GM12878 (cell line): ENCODE measurements at regions of chr2 and their contacts with region 1.

Region 1: DNA sequence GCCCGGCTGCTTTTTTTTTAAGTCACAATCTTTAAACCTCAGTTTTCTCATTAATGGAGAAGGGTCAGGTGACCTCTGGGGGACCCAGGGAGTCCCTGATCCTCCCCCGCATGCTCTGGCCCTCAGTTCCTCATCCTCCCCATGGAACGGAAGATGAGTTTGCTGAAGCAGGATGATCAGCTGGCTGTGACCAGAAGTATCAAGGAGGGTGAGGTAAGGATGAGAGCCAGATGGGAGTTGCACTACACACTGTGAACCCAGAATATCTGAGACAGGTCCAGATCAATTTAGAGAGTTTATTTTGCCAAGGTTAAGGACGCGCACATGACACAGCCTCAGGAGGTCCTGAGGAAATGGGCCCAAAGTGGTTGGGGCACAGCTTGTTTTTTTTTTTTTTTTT is 3.8 kb downstream of the CATIP start:
- DNase-seq: no peak
- ATAC-seq: no peak
- H3K4me3 ChIP-seq: no peak overlapping the region
- H3K27ac ChIP-seq: no peak overlapping the region
- H3K4me1 ChIP-seq: peaks cover 7% of the 10 kb centered on the region
- H3K27me3 ChIP-seq: no peaks in the 10 kb centered on the region
- CTCF ChIP-seq: no peak
- EP300 ChIP-seq: no peak
- POLR2A ChIP-seq: no peak
- RAD21 ChIP-seq: no peak

Region 2: DNA sequence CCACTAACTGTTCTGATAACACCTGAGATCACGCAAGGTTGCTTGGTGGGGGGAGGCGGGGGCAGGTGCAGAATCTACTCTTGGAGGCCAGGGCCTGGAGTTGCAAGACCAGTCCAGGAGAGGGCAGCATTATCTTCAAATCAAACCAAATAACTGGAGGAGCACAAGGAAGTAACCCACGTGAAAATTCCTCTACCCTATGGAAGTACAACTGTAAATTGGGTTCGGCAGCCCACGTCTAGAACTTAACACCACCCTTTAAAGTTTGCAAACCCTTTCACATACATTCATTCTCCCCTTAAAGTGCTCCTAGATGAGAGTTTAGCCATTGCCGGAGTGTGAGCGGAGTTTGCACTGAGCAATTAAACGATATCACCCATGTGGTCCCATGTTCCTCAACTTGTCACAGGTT is 174.1 kb before region 1 on chr2:
- CTCF ChIA-PET with region 1: interaction called, 3 read pairs
- POLR2A ChIA-PET with region 1: no interaction called
- RAD21 ChIA-PET with region 1: no interaction called
- SMC1A ChIA-PET with region 1: no interaction called
- in situ Hi-C with region 1: no loop called
- intact Hi-C with region 1: loop called (anchors 10 kb)
- DNase-seq: peak; percentile 25
- ATAC-seq: peak; percentile 96
- H3K4me3 ChIP-seq: no peak overlapping the region
- H3K27ac ChIP-seq: no peak overlapping the region
- H3K4me1 ChIP-seq: no peaks in the 10 kb centered on the region
- H3K27me3 ChIP-seq: peaks cover 0 to 1% of the 10 kb centered on the region in 2 experiments; a peak in 3 of 4 replicates
- CTCF ChIP-seq: peak; percentile 82 to 86 (median 85)
- EP300 ChIP-seq: no peak
- POLR2A ChIP-seq: no peak
- RAD21 ChIP-seq: peak; percentile 78

Region 3: GRCh38 chr2:218238887-218239286 is 121.6 kb before region 1 on chr2:
- CTCF ChIA-PET with region 1: no interaction called
- POLR2A ChIA-PET with region 1: no interaction called
- RAD21 ChIA-PET with region 1: no interaction called
- SMC1A ChIA-PET with region 1: no interaction called
- in situ Hi-C with region 1: no loop called
- intact Hi-C with region 1: no loop called
- DNase-seq: no peak
- ATAC-seq: no peak
- H3K4me3 ChIP-seq: no peak overlapping the region
- H3K27ac ChIP-seq: no peak overlapping the region
- H3K4me1 ChIP-seq: no peaks in the 10 kb centered on the region
- H3K27me3 ChIP-seq: no peaks in the 10 kb centered on the region
- CTCF ChIP-seq: no peak
- EP300 ChIP-seq: no peak
- POLR2A ChIP-seq: no peak
- RAD21 ChIP-seq: no peak

Region 4: GRCh38 chr2:218286570-218287459 is 73.6 kb before region 1 on chr2:
- CTCF ChIA-PET with region 1: interaction called, 21 read pairs
- POLR2A ChIA-PET with region 1: no interaction called
- RAD21 ChIA-PET with region 1: interaction called, 30 read pairs
- SMC1A ChIA-PET with region 1: interaction called, 11 read pairs
- in situ Hi-C with region 1: no loop called
- intact Hi-C with region 1: no loop called
- DNase-seq: peak; percentile 72
- ATAC-seq: peak; percentile 76
- H3K4me3 ChIP-seq: peak overlapping the region; percentile 64
- H3K27ac ChIP-seq: peak overlapping the region; percentile 95
- H3K4me1 ChIP-seq: peaks cover 55% of the 10 kb centered on the region
- H3K27me3 ChIP-seq: no peaks in the 10 kb centered on the region
- CTCF ChIP-seq: no peak
- EP300 ChIP-seq: no peak
- POLR2A ChIP-seq: peak; percentile 57; the same call in 1 of the 2 replicates
- RAD21 ChIP-seq: no peak

Region 5: DNA sequence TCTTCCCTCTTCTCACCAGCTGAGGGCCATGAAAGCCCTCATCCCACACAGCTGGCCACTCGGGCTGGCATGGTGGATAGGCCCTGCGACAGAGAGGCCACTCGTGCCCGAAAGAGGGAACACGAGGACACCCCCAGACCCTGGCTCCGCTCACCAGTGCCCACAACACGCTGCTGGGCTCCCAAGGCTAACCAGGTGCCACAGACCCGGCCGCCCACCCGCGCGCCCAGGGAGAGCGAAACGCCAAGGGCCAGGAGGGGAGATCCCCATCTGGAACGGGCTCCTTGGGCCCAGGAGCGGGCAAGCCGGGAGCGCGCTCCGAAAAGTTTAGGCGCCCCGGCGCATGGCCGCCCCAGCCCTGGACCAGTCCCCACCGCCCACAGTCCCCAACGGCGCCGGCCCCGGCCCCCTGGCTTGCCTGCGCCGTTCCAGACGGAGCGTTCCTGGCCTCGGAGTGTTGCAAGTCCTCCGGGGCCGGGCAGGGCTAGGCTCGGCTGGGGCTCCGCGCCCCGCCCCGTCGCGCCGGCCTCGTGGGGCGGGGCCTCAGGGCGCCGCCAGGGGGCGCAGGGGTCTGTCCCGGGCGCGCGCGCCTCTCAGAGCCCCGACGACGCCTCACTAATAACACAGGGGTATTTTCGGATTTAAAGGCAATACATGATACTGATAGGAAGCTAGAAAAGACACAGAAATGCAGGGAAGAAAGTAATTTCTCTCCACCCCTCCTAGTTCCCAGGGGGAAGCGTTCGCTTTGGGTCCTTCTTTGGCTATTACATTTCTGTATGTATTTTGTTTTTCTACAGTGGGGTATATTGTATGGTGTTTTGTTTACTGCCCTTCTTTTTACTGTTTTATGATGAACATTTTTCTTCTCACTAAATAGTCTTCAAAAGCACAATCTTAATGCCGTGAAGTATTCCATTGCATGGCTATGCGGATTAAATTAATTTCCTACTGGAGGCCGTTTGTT is 68.1 kb before region 1 on chr2 and contains the start of gene TMBIM1:
- CTCF ChIA-PET with region 1: interaction called, 43 read pairs
- POLR2A ChIA-PET with region 1: interaction called, 5 read pairs
- RAD21 ChIA-PET with region 1: interaction called, 30 read pairs
- SMC1A ChIA-PET with region 1: interaction called, 11 read pairs
- in situ Hi-C with region 1: no loop called
- intact Hi-C with region 1: no loop called
- DNase-seq: no peak
- ATAC-seq: peak; percentile 87
- H3K4me3 ChIP-seq: peak within 1 kb of the TSS; percentile 85
- H3K27ac ChIP-seq: peak within 1 kb of the TSS; percentile 72
- H3K4me1 ChIP-seq: peaks cover 28% of the 10 kb centered on the region
- H3K27me3 ChIP-seq: no peaks in the 10 kb centered on the region
- CTCF ChIP-seq: peak; percentile 68 to 92 (median 85)
- EP300 ChIP-seq: no peak
- POLR2A ChIP-seq: peak; percentile 58
- RAD21 ChIP-seq: peak; percentile 51
- polyA plus RNA-seq, gene TMBIM1: 6.1 to 11.7 TPM

Region 6: DNA sequence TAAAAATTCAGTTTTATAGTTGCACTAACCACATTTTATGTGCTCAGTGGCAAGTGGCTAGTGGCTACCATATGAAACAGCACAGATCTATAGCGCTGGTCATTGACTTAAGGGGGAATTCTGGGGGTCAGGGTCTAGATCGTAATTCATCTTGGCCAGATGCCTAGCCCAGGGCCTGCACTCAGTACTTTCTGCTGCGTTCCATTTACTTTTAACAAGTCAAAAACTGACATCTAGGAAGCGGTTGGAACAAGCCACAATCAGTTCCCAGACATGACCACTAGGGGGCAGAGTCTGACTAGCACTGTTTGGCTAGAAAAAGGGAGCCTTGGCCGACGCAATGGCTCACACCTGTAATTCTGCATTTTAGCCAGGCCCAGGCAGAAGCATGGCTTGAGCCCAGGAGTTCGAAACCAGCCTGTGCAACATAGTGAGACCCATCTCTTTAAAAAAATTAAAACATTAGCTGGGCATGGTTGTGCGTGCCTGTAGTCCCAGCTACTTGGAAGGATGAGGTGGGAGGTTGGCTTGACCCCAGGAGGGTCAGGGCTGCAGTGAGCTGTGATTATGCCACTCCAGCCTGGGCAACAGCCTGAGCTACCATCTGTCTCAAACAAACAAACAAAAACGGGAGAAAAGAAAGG is 59.1 kb before region 1 on chr2:
- CTCF ChIA-PET with region 1: interaction called, 138 read pairs
- POLR2A ChIA-PET with region 1: interaction called, 10 read pairs
- RAD21 ChIA-PET with region 1: interaction called, 34 read pairs
- SMC1A ChIA-PET with region 1: interaction called, 70 read pairs
- in situ Hi-C with region 1: no loop called
- intact Hi-C with region 1: loop called (anchors 1 kb)
- DNase-seq: peak; percentile 82
- ATAC-seq: peak; percentile 97
- H3K4me3 ChIP-seq: no peak overlapping the region
- H3K27ac ChIP-seq: no peak overlapping the region
- H3K4me1 ChIP-seq: no peaks in the 10 kb centered on the region
- H3K27me3 ChIP-seq: no peaks in the 10 kb centered on the region
- CTCF ChIP-seq: peak; percentile 90 to 93 (median 92)
- EP300 ChIP-seq: no peak
- POLR2A ChIP-seq: no peak
- RAD21 ChIP-seq: peak; percentile 97

Region 7: GRCh38 chr2:218322895-218323808 is 37.3 kb before region 1 on chr2:
- CTCF ChIA-PET with region 1: interaction called, 14 read pairs
- POLR2A ChIA-PET with region 1: no interaction called
- RAD21 ChIA-PET with region 1: no interaction called
- SMC1A ChIA-PET with region 1: interaction called, 7 read pairs
- in situ Hi-C with region 1: no loop called
- intact Hi-C with region 1: loop called (anchors 5 kb)
- DNase-seq: no peak
- ATAC-seq: peak; percentile 87
- H3K4me3 ChIP-seq: peak overlapping the region; percentile 69
- H3K27ac ChIP-seq: no peak overlapping the region
- H3K4me1 ChIP-seq: peaks cover 15% of the 10 kb centered on the region
- H3K27me3 ChIP-seq: no peaks in the 10 kb centered on the region
- CTCF ChIP-seq: no peak
- EP300 ChIP-seq: no peak
- POLR2A ChIP-seq: peak; percentile 35; the same call in 1 of the 2 replicates
- RAD21 ChIP-seq: no peak

Region 8: DNA sequence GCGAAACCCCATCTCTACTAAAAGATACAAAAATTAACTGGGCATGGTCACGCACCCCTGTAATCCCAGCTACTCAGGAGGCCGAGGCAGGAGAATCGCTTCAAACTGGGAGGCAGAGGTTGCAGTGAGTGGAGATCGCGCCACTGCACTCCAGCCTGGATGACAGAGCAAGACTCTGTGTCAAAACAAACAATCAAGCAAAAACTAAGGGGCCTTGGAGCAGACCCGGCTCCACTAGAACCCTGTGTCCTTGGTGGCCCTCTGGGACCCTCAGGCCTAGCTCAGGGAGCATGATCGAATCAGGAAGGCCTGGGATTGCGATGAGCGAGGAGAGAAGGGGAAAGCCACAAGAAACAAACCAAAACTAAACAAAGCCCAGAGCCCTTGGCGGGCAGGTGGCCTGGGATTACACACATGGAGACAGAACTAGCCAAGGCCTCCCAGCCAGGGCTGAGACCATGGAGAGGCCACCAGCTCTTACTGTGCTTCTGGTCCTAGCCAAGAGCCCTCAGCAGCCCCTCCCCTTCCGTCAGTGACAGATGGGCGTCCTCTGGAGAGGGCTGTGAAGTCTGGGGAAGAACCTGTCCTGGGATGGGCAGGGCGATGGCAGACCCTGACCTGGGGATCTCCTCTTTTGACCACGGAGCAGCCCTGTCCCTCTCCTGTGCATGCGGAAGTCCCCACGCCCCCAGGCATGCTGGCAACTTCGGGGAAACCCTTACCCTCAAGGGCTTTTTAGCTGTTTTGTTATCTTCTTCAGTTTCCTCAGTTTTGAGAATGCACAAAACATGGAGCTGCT is 31.2 kb before region 1 on chr2:
- CTCF ChIA-PET with region 1: interaction called, 14 read pairs
- POLR2A ChIA-PET with region 1: interaction called, 10 read pairs
- RAD21 ChIA-PET with region 1: interaction called, 16 read pairs
- SMC1A ChIA-PET with region 1: interaction called, 12 read pairs
- in situ Hi-C with region 1: no loop called
- intact Hi-C with region 1: loop called (anchors 5 kb)
- DNase-seq: peak; percentile 77
- ATAC-seq: peak; percentile 81
- H3K4me3 ChIP-seq: peak overlapping the region; percentile 12; the same call in 1 of the 2 replicates
- H3K27ac ChIP-seq: peak overlapping the region; percentile 77
- H3K4me1 ChIP-seq: peaks cover 49% of the 10 kb centered on the region
- H3K27me3 ChIP-seq: no peaks in the 10 kb centered on the region
- CTCF ChIP-seq: no peak
- EP300 ChIP-seq: 0 out of 4 replicates have a peak, but pooled peaks of 1 of the 2 experiments have one; percentile 39
- POLR2A ChIP-seq: no peak
- RAD21 ChIP-seq: no peak

Region 9: GRCh38 chr2:218485986-218486667 is 125.7 kb after region 1 on chr2:
- CTCF ChIA-PET with region 1: no interaction called
- POLR2A ChIA-PET with region 1: no interaction called
- RAD21 ChIA-PET with region 1: no interaction called
- SMC1A ChIA-PET with region 1: no interaction called
- in situ Hi-C with region 1: no loop called
- intact Hi-C with region 1: no loop called
- DNase-seq: no peak
- ATAC-seq: no peak
- H3K4me3 ChIP-seq: no peak overlapping the region
- H3K27ac ChIP-seq: no peak overlapping the region
- H3K4me1 ChIP-seq: peaks cover 13% of the 10 kb centered on the region
- H3K27me3 ChIP-seq: no peaks in the 10 kb centered on the region
- CTCF ChIP-seq: no peak
- EP300 ChIP-seq: no peak
- POLR2A ChIP-seq: no peak
- RAD21 ChIP-seq: no peak